Panc1 (cell line): ENCODE measurements at regions of chr12 and their contacts with region 1.

Region 1: DNA sequence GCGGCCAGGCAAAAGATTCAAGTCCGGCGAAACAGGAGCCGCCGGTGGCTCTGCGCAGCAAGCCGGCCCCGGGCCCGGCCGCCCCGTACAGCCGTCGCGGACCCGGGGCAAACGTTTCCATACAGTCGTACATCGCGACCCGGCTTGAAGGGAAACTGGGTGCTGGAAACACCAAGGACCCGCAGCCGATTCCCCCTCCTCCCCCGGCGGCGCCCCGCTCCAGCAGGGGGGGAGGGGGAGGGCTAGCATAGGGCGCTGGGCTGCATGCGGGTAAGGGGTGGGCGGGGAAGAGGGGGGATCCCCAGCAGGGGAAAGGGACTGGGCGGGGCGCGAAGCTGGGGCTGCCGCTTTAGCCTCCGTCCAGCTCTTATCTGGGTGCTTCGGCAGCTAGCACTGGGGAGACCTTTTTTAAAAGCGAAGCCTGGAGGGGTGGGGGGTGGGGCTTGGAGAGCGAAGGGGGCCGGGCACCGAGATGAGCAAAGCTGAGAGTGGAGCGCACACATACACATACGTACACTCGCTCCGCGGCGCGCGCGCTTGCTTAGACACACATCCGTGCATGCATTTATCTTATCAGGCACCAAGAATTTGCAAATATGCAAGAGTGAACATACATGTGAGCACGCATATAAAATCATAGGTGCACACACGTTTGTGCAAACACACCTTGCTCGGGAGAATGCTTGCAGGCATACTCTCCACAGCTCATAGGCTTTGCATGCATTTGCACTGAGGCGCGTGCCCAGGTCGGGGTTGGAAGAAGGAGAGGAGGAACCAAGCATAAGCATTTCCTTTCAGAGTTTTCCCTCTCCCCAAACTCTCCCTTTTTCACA is 11.8 kb downstream of the RARG start:
- DNase-seq: peak; percentile 72
- ATAC-seq: peak; percentile 62
- H3K4me3 ChIP-seq: peak overlapping the region; percentile 68 to 79
- H3K27ac ChIP-seq: peak overlapping the region; percentile 84
- H3K4me1 ChIP-seq: peaks cover 65% of the 10 kb centered on the region
- H3K27me3 ChIP-seq: no peaks in the 10 kb centered on the region
- CTCF ChIP-seq: no peak

Region 2: GRCh38 chr12:52980693-52981423 is 239.3 kb before region 1 on chr12:
- CTCF ChIA-PET with region 1: no interaction called
- POLR2A ChIA-PET with region 1: no interaction called
- in situ Hi-C with region 1: no loop called
- intact Hi-C with region 1: no loop called
- DNase-seq: peak; percentile 94
- ATAC-seq: peak; percentile 89
- H3K4me3 ChIP-seq: no peak overlapping the region
- H3K27ac ChIP-seq: peak overlapping the region; percentile 53
- H3K4me1 ChIP-seq: peaks cover 25% of the 10 kb centered on the region
- H3K27me3 ChIP-seq: no peaks in the 10 kb centered on the region
- CTCF ChIP-seq: peak; percentile 98

Region 3: GRCh38 chr12:53169644-53170043 is 50.5 kb before region 1 on chr12:
- CTCF ChIA-PET with region 1: no interaction called
- POLR2A ChIA-PET with region 1: no interaction called
- in situ Hi-C with region 1: no loop called
- intact Hi-C with region 1: no loop called
- DNase-seq: no peak
- ATAC-seq: no peak
- H3K4me3 ChIP-seq: no peak overlapping the region
- H3K27ac ChIP-seq: no peak overlapping the region
- H3K4me1 ChIP-seq: peaks cover under 1% of the 10 kb centered on the region; the same call in 1 of the 2 replicates
- H3K27me3 ChIP-seq: no peaks in the 10 kb centered on the region
- CTCF ChIP-seq: no peak

Region 4: GRCh38 chr12:53180220-53180930 is 39.8 kb before region 1 on chr12 and contains the starts of genes CSAD and ZNF740:
- CTCF ChIA-PET with region 1: no interaction called
- POLR2A ChIA-PET with region 1: interaction called, 17 read pairs
- in situ Hi-C with region 1: no loop called
- intact Hi-C with region 1: no loop called
- DNase-seq: peak; percentile 85
- ATAC-seq: peak; percentile 99
- H3K4me3 ChIP-seq: peak within 1 kb of the TSS; percentile 70 to 74
- H3K27ac ChIP-seq: peak within 1 kb of the TSS; percentile 98
- H3K4me1 ChIP-seq: peaks cover 31% of the 10 kb centered on the region
- H3K27me3 ChIP-seq: no peaks in the 10 kb centered on the region
- CTCF ChIP-seq: no peak
- total RNA-seq, gene CSAD: 15.4 TPM
- total RNA-seq, gene ZNF740: 46.8 TPM

Region 5: GRCh38 chr12:53251477-53252348 is 31.5 kb after region 1 on chr12:
- CTCF ChIA-PET with region 1: interaction called, 4 read pairs
- POLR2A ChIA-PET with region 1: interaction called, 10 read pairs
- in situ Hi-C with region 1: no loop called
- intact Hi-C with region 1: loop called (anchors 5 kb)
- DNase-seq: peak; percentile 63
- ATAC-seq: peak; percentile 92
- H3K4me3 ChIP-seq: peak overlapping the region; percentile 74 to 86
- H3K27ac ChIP-seq: peak overlapping the region; percentile 90
- H3K4me1 ChIP-seq: peaks cover 11% of the 10 kb centered on the region
- H3K27me3 ChIP-seq: no peaks in the 10 kb centered on the region
- CTCF ChIP-seq: peak; percentile 75; the same call in 1 of the 2 replicates

Region 6: DNA sequence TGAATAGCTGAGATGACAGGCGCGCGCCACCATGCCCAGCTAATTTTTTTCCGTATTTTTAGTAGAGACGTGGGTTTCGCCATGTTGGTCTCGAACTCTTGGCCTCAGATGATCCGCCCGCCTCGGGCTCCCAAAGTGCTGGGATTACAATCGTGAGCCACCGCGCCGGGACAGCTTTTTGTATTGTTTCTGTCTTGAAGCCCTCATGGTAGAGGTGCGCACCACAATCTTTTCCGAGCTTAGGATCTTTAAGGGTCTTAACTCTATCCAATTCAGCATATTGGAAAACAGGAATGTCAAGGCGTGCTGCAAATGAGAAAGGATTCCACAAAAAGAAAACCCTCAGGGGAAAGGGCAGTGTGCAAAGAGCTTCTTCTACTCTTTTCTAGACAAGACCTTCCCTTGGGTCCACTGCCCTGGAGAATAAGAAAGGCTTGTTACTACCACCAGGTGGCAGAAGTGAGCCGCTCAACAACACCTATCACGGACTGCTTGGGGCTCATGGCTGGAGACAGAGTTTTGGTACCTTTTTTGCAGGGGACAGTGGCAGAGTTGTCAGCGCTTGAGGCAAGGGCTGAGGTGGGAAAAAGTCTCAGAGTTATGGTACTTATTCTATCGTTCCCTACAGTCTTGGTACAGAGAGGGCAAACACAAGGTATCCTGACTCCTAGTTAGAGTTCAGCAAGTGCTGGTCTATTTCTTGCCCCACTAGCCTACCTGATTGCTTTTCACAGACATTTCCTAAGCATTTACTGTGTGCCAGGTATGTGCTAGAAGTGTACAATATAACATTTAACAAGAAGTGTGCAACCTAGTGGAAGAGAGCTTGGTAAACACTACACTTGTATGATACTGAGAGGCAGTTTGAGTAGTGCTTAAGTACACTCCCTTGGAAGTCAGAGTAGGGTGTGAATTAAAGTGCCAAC is 132.4 kb after region 1 on chr12:
- CTCF ChIA-PET with region 1: no interaction called
- POLR2A ChIA-PET with region 1: no interaction called
- in situ Hi-C with region 1: no loop called
- intact Hi-C with region 1: no loop called
- DNase-seq: peak; percentile 84
- ATAC-seq: peak; percentile 99
- H3K4me3 ChIP-seq: no peak overlapping the region
- H3K27ac ChIP-seq: peak overlapping the region; percentile 75
- H3K4me1 ChIP-seq: peaks cover 7% of the 10 kb centered on the region
- H3K27me3 ChIP-seq: no peaks in the 10 kb centered on the region
- CTCF ChIP-seq: peak; percentile 89